Heart right ventricle (tissue), 16 donors: ENCODE measurements at regions of chr4 and their contacts with region 1.

Region 1: GRCh38 chr4:107183155-107183774 is 147.2 kb upstream of the DKK2 start:
- DNase-seq: peak in 1 of 2 donors; percentile 17
- ATAC-seq: peak; percentile 47 to 87 (median 78)
- H3K4me3 ChIP-seq: no peak overlapping the region
- H3K27ac ChIP-seq: no peak overlapping the region
- H3K4me1 ChIP-seq: no peaks in the 10 kb centered on the region
- H3K27me3 ChIP-seq: no peaks in the 10 kb centered on the region
- CTCF ChIP-seq: peak; percentile 51 to 83 (median 79)

Region 2: DNA sequence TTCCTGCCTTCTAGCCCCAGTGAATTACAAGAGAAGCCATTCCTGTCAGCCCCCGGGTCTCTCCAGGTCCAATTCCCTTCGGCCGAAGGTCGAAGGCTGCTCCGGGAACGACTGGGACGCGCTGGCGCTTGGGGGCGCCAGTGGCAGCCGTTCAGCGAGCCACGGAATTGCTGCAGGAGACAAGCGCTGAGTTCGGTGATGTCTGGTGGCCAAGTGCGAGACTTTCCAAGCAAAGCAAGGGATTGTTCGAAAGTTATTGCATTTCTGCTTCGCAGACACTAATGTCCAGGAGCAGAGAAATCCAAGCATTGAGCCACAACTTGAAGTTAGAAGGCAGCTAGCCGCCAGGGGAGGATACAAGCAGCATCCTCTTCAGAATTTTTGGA is 146.1 kb before region 1 on chr4:
- intact Hi-C with region 1: loop called in 5 of 10 experiments (anchors 10 kb)
- DNase-seq: peak in 1 of 2 donors; percentile 22
- ATAC-seq: peak in 4 of 8 donors; percentile 48 to 78 (median 60)
- H3K4me3 ChIP-seq: peak overlapping the region in 5 of 10 donors; percentile 2 to 54 (median 46)
- H3K27ac ChIP-seq: no peak overlapping the region
- H3K4me1 ChIP-seq: peaks cover 0 to 33% (median 22%) of the 10 kb centered on the region in 9 donors
- H3K27me3 ChIP-seq: peaks cover 0 to 85% (median 71%) of the 10 kb centered on the region in 7 donors
- CTCF ChIP-seq: peak in 6 of 9 donors; percentile 27 to 53 (median 34)

Region 3: GRCh38 chr4:107044170-107044569 is 139.1 kb before region 1 on chr4:
- intact Hi-C with region 1: loop called in 6 of 10 experiments (anchors 5 to 10 kb)
- DNase-seq: no peak
- ATAC-seq: no peak
- H3K4me3 ChIP-seq: no peak overlapping the region
- H3K27ac ChIP-seq: no peak overlapping the region
- H3K4me1 ChIP-seq: no peaks in the 10 kb centered on the region
- H3K27me3 ChIP-seq: peaks cover 0 to 16% (median 9%) of the 10 kb centered on the region in 7 donors
- CTCF ChIP-seq: no peak

Region 4: GRCh38 chr4:107050525-107051135 is 132.6 kb before region 1 on chr4:
- intact Hi-C with region 1: loop called in 6 of 10 experiments (anchors 5 to 10 kb)
- DNase-seq: no peak
- ATAC-seq: no peak
- H3K4me3 ChIP-seq: no peak overlapping the region
- H3K27ac ChIP-seq: no peak overlapping the region
- H3K4me1 ChIP-seq: no peaks in the 10 kb centered on the region
- H3K27me3 ChIP-seq: no peaks in the 10 kb centered on the region
- CTCF ChIP-seq: peak in 7 of 9 donors; percentile 32 to 59 (median 42)

Region 5: GRCh38 chr4:107736924-107737448 is 553.7 kb after region 1 on chr4:
- intact Hi-C with region 1: loop called in 1 of 10 experiments (anchors 10 kb)
- DNase-seq: peak in 1 of 2 donors; percentile 38
- ATAC-seq: peak in 6 of 8 donors; percentile 37 to 63 (median 52)
- H3K4me3 ChIP-seq: no peak overlapping the region
- H3K27ac ChIP-seq: no peak overlapping the region
- H3K4me1 ChIP-seq: peaks cover 0 to 41% (median 10%) of the 10 kb centered on the region in 9 donors
- H3K27me3 ChIP-seq: no peaks in the 10 kb centered on the region
- CTCF ChIP-seq: peak; percentile 51 to 88 (median 78)